Activated T-helper 2 cell treated with anti-CD3 and anti-CD28 coated beads, Interferon-gamma antibody, Interleukin-2, Interleukin-4, amounts not matched to agents 10 μg/mL and 5 μg/mL and 100 μg/mL, durations not matched to agents 14 hours and 24 hours and 36 hours (primary cell): ENCODE measurements at regions of chr1 and their contacts with region 1.

Region 1: GRCh38 chr1:156096640-156097391 is 14.6 kb upstream of the MEX3A start:
- DNase-seq: peak; percentile 71
- H3K4me3 Mint-ChIP-seq: peak overlapping the region; percentile 49
- H3K27ac Mint-ChIP-seq: peak overlapping the region; percentile 95
- H3K4me1 Mint-ChIP-seq: peaks cover 45% of the 10 kb centered on the region
- H3K27me3 Mint-ChIP-seq: peaks cover 5% of the 10 kb centered on the region

Region 2: DNA sequence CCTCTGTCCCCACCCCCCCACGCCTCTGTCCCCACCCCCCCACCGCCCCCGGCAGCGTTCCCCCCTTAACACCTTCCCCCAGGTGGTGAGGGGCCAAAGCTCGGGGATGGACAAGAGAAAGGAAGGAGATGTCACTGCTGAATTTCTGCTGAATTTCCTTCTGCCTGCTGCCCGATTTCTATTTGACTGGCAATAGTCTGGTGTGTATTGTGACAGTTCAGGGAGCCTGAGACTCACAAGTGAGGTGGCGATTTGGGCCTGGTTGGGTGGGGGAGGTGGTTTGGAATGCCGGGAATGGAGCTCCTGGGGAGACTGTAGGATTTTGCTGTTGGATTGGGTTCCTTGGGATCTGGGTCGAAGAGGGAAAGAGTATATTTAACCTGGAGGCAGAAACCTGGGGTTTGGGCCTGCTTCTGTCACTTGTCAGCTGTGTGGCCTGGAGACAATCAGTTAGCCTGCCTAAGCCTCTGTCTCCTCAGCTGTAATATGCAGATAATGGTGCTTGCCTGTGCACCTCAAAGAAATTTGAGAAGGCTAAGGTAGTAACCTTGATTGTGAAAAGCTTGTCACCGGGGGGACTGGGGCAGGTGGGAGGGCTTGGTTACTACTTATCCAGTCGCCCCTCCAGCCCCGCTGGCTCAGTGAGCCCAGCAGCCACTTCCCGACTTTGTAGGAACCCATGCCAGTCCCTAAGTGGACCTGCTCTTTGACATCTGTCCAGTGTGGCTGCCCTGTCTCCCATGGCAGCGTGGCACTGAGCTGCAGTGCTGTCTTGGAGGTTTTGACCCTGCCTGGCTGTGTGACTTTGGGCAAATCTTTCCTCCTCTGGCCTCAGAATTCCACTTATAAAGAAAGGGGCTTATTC is 10.0 kb after region 1 on chr1:
- intact Hi-C with region 1: loop called (anchors 1 kb)
- DNase-seq: no peak
- H3K4me3 Mint-ChIP-seq: peak overlapping the region; percentile 87
- H3K27ac Mint-ChIP-seq: peak overlapping the region; percentile 100
- H3K4me1 Mint-ChIP-seq: peaks cover 54% of the 10 kb centered on the region
- H3K27me3 Mint-ChIP-seq: no peaks in the 10 kb centered on the region

Region 3: DNA sequence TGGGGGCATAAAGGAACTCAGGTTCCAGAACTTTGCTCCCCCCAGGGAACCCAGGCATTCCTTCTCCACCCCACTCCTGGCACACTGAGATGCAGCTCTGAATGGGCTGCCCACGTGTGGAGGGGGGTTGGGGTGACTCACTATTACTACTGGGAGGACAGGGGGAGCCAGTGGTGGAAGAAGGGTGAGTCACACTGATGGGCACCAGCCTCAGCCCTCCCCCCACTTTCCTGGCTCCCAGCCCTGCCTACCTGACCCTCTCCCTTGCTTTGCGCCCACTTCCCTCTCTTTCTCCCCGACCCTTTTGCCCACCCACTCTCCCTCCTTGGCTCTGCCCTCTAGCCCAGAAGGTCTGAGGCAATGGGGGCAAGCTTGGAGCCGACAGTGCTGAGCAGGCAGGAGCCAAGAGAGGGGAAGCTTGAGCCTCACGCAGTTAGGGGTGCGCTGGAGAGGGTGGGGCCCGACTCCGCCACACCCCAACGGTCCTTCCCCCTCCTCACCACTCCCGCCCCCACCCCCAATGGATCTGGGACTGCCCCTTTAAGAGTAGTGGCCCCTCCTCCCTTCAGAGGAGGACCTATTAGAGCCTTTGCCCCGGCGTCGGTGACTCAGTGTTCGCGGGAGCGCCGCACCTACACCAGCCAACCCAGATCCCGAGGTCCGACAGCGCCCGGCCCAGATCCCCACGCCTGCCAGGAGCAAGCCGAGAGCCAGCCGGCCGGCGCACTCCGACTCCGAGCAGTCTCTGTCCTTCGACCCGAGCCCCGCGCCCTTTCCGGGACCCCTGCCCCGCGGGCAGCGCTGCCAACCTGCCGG is 17.5 kb after region 1 on chr1 and contains the start of gene LMNA:
- intact Hi-C with region 1: loop called (anchors 1 kb)
- DNase-seq: peak; percentile 70
- H3K4me3 Mint-ChIP-seq: peak within 1 kb of the TSS; percentile 95
- H3K27ac Mint-ChIP-seq: peak within 1 kb of the TSS; percentile 80
- H3K4me1 Mint-ChIP-seq: peaks cover 35% of the 10 kb centered on the region
- H3K27me3 Mint-ChIP-seq: peaks cover 1% of the 10 kb centered on the region
- total RNA-seq, gene LMNA: 246 and 247 TPM in 2 replicates

Region 4: GRCh38 chr1:156129706-156130581 is 33.1 kb after region 1 on chr1:
- intact Hi-C with region 1: loop called (anchors 1 kb)
- DNase-seq: peak; percentile 63
- H3K4me3 Mint-ChIP-seq: no peak overlapping the region
- H3K27ac Mint-ChIP-seq: peak overlapping the region; percentile 33
- H3K4me1 Mint-ChIP-seq: peaks cover 47% of the 10 kb centered on the region
- H3K27me3 Mint-ChIP-seq: no peaks in the 10 kb centered on the region

Region 5: GRCh38 chr1:156212833-156213643 is 116.2 kb after region 1 on chr1 and contains the start of gene PMF1:
- intact Hi-C with region 1: loop called (anchors 1 kb)
- DNase-seq: peak; percentile 95
- H3K4me3 Mint-ChIP-seq: peak within 1 kb of the TSS; percentile 93
- H3K27ac Mint-ChIP-seq: peak within 1 kb of the TSS; percentile 98
- H3K4me1 Mint-ChIP-seq: peaks cover 31% of the 10 kb centered on the region
- H3K27me3 Mint-ChIP-seq: no peaks in the 10 kb centered on the region
- total RNA-seq, gene PMF1: 115 and 117 TPM in 2 replicates

Region 6: DNA sequence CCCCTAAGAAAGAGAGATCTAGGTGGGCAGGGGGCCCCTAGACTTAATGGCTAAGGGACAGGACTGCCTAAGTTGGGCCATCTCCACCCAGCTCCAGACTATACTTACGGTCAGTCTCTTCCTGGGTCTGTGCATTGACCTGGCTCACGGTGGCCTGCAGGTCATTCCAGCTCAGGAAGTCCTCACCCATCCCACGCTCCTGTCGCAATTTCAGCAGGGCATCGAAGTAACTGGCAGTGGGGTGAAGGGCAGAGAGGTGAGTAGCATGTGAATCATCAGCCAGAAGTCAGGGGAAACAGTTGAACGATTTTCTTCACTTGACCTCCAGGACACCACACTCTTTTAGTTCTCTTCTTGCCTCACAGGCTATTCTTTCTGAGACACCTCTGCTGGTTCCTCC is 455.1 kb after region 1 on chr1:
- intact Hi-C with region 1: no loop called
- DNase-seq: no peak
- H3K4me3 Mint-ChIP-seq: no peak overlapping the region
- H3K27ac Mint-ChIP-seq: no peak overlapping the region
- H3K4me1 Mint-ChIP-seq: peaks cover 3% of the 10 kb centered on the region
- H3K27me3 Mint-ChIP-seq: no peaks in the 10 kb centered on the region